Kidney (tissue), 22 donors: ENCODE measurements at regions of chr4 and their contacts with region 1.

Region 1: GRCh38 chr4:153083447-153083947 is 120.7 kb upstream of the TRIM2 start:
- DNase-seq: peak in 4 of 5 donors; percentile 81 to 92 (median 86)
- H3K4me3 ChIP-seq: peak overlapping the region in 1 of 3 donors; percentile 4
- H3K27ac ChIP-seq: no peak overlapping the region
- H3K4me1 ChIP-seq: no peaks in the 10 kb centered on the region
- H3K27me3 ChIP-seq: no peaks in the 10 kb centered on the region
- CTCF ChIP-seq: peak; percentile 68

Region 2: DNA sequence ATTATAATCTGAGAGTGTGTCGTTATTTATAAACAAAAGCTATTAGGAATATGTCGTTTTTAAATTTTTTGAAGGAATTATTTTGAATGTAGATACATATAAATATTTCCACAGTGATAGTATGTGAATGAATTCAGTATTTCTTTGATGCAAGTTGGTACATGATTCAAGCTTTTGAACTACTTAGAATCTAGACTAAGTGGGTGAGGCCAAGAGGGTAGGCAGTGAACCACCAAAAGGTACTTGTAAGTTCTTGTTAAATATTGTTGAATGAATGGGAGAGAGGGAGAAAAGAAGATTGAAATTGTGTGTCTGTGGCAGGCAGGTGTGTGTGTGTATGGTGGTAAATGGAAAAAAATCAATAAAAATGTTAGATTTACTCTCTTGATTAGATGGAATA is 234.1 kb before region 1 on chr4:
- intact Hi-C with region 1: loop called (anchors 5 kb)
- DNase-seq: no peak
- H3K4me3 ChIP-seq: no peak overlapping the region
- H3K27ac ChIP-seq: no peak overlapping the region
- H3K4me1 ChIP-seq: peaks cover 0 to 6% (median 2%) of the 10 kb centered on the region in 3 donors
- H3K27me3 ChIP-seq: no peaks in the 10 kb centered on the region
- CTCF ChIP-seq: no peak

Region 3: DNA sequence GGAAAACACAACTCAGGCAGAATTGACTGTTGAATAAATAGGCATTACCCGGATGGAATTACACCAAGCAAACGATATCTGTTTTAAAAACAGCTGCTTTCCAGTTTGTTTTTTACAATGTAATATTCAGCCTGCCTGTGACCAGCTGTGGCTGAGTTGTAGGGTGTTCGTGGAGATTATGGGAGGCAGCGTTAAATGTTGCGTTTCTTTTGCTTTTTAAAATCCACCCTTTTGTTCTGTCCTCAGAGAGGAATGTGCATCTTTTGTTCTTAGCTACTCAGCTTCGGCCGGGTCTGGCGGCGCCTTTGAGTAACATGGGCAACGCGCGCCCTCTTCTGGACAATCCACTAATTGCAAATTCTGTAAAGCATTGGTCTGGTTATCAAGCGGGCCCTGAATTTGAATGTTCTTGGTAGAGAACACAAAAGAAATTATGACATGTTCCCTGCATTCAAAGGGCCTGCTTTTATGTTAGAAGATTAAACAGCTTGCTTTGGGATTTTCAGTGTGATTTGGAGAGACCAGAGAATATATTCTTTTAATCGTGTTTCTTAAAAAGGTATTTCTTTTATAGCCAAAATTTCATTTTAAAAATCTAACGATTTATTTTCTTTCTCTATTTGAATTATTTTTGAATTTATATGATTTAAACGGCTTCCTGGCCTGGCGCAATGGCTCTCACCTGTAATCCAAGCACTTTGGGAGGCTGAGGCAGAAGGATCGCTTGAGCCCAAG is 44.4 kb after region 1 on chr4:
- intact Hi-C with region 1: loop called (anchors 5 kb)
- DNase-seq: peak; percentile 88 to 96 (median 92)
- H3K4me3 ChIP-seq: peak overlapping the region in 2 of 3 donors; percentile 21 to 67
- H3K27ac ChIP-seq: no peak overlapping the region
- H3K4me1 ChIP-seq: no peaks in the 10 kb centered on the region
- H3K27me3 ChIP-seq: no peaks in the 10 kb centered on the region
- CTCF ChIP-seq: peak; percentile 95

Region 4: GRCh38 chr4:153276971-153277370 is 193.5 kb after region 1 on chr4:
- intact Hi-C with region 1: no loop called
- DNase-seq: no peak
- H3K4me3 ChIP-seq: no peak overlapping the region
- H3K27ac ChIP-seq: no peak overlapping the region
- H3K4me1 ChIP-seq: peaks cover 0 to 21% (median 8%) of the 10 kb centered on the region in 3 donors
- H3K27me3 ChIP-seq: no peaks in the 10 kb centered on the region
- CTCF ChIP-seq: no peak

Region 5: GRCh38 chr4:153344131-153345010 is 260.9 kb after region 1 on chr4 and contains the start of gene MND1:
- intact Hi-C with region 1: no loop called
- DNase-seq: peak; percentile 93 to 96 (median 94)
- H3K4me3 ChIP-seq: peak within 1 kb of the TSS; percentile 79 to 85 (median 85)
- H3K27ac ChIP-seq: no peak within 1 kb of the TSS
- H3K4me1 ChIP-seq: peaks cover 0 to 2% (median 0%) of the 10 kb centered on the region in 3 donors
- H3K27me3 ChIP-seq: no peaks in the 10 kb centered on the region
- CTCF ChIP-seq: peak; percentile 80
- total RNA-seq, gene MND1: 0.98 TPM